ENCODE measurements at regions of chr5 and their contacts with region 1.

Region 1: GRCh38 chr5:56838409-56839039 is 23.2 kb downstream of the MAP3K1 start:
- DNase-seq: no peak
- H3K4me3 Mint-ChIP-seq: peak overlapping the region; percentile 55
- H3K27ac Mint-ChIP-seq: peak overlapping the region; percentile 80
- H3K4me1 Mint-ChIP-seq: peaks cover 85% of the 10 kb centered on the region
- H3K27me3 Mint-ChIP-seq: no peaks in the 10 kb centered on the region

Region 2: DNA sequence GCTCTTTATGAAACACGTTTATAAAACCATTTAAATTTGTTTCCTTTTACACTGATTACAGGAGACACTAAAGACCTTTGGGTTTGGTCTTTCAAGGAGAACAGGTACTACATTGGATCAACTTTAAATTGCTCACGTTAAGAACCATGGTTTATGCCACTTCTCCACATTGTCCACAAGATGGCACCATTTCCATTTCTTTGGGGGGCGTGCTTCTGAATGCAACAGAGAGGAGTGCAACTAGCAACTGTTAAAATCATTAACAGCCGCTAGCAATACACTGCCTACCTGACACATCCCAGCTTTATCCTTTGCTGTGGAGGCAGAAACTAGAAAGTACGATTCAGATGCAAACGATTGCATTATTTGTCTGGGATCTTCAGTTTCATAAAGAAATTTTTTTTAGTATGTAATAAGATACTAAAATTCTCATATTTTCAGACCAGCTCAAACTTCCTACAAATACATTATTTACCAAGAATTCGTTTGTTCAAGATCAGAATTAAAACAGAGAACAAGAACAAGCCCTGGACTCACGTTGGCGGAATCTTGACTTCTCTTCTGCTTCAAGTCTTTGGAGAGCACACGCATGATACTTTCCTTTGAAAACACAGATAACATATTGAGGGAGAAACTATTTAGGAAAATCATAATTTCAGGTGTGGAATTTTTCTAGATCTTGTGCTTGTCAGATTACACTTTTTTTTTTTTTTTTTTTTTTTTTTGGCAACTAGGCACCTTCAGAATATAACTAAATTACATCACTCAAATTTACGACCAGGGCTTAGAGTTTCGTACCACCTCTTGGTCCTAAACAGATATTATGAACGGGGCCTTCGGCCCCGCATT is 1666.2 kb before region 1 on chr5:
- CTCF ChIA-PET with region 1: no interaction called
- POLR2A ChIA-PET with region 1: no interaction called
- intact Hi-C with region 1: loop called (anchors 5 kb)
- DNase-seq: peak; percentile 75
- H3K4me3 Mint-ChIP-seq: peak overlapping the region; percentile 80
- H3K27ac Mint-ChIP-seq: no peak overlapping the region
- H3K4me1 Mint-ChIP-seq: peaks cover 39% of the 10 kb centered on the region
- H3K27me3 Mint-ChIP-seq: peaks cover 60% of the 10 kb centered on the region

Region 3: DNA sequence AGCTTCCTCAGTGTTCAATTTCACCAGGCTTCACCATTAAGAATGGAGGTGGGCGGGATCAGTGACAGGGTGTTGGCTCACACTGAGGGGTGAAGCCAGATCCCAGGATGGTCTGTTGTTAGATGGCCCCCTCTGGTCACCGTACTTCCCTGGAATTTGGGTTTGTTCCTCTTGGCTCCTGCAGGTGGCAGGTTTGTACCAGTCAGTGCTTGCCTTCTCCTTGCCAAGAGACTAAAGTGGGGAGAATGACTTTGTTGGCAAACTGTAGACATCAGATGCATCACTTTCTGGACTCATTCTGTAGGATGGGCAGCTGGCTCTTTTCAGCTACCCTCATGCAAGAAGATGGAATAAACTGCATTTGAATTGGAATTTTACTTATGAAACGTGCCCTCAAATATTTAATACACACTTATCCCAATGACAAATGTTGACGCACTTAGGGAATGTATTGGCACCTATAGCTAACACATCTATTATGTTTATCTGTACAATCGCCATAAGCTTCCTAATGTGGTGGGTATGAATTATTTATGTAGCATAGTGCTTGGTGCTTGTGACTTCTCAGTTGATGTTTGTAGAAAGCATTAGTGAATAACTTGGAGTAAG is 574.0 kb before region 1 on chr5:
- CTCF ChIA-PET with region 1: interaction called, 172 read pairs
- POLR2A ChIA-PET with region 1: no interaction called
- intact Hi-C with region 1: no loop called
- DNase-seq: peak; percentile 43
- H3K4me3 Mint-ChIP-seq: no peak overlapping the region
- H3K27ac Mint-ChIP-seq: no peak overlapping the region
- H3K4me1 Mint-ChIP-seq: peaks cover 2% of the 10 kb centered on the region
- H3K27me3 Mint-ChIP-seq: no peaks in the 10 kb centered on the region

Region 4: GRCh38 chr5:56601641-56602071 is 236.9 kb before region 1 on chr5:
- CTCF ChIA-PET with region 1: no interaction called
- POLR2A ChIA-PET with region 1: no interaction called
- intact Hi-C with region 1: loop called (anchors 2 kb)
- DNase-seq: no peak
- H3K4me3 Mint-ChIP-seq: no peak overlapping the region
- H3K27ac Mint-ChIP-seq: no peak overlapping the region
- H3K4me1 Mint-ChIP-seq: peaks cover 45% of the 10 kb centered on the region
- H3K27me3 Mint-ChIP-seq: no peaks in the 10 kb centered on the region

Region 5: DNA sequence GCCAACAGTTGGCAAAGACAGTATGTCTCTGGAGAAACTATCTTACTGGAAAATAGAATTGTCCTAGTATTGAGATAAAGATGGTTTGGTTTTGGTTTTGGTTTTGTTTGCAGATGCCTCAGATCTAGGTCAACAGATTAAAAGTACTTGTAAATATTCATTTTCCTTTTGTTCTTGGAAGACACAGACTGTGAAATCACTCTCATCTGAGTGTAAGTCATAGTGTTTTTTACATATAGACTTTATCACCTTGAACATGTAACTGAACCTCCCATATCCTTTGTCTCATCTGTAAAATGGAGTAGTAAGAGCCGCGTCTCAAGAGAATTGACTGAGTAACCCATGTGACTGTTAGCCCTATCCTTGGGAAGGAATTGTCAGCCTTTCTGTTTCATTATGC is 11.1 kb after region 1 on chr5:
- CTCF ChIA-PET with region 1: interaction called, 14 read pairs
- POLR2A ChIA-PET with region 1: interaction called, 4 read pairs
- intact Hi-C with region 1: no loop called
- DNase-seq: no peak
- H3K4me3 Mint-ChIP-seq: peak overlapping the region; percentile 61
- H3K27ac Mint-ChIP-seq: peak overlapping the region; percentile 75
- H3K4me1 Mint-ChIP-seq: peaks cover 88% of the 10 kb centered on the region
- H3K27me3 Mint-ChIP-seq: no peaks in the 10 kb centered on the region